CD8-positive, alpha-beta T cell (primary cell): ENCODE measurements at regions of chr2 and their contacts with region 1.

Region 1: DNA sequence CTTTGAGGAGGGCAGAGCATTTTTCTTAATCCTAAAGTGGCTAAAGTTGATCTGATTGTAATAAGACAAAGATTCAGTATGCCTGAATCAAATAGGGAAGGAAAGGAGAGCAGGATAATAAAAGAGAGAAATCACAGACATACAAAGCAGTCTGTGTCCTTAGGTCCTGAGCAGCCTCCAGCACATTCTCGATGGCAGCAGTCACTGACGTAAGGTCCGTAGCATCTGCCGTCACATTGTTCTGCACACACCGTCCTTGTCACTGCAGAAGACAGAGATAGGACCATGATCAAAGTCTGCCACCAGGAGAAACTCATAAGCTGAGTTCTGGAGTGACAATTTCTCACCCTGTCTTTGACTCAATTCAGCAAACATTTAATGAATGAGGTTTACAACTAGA is 813.7 kb downstream of the ERBB4 start:
- DNase-seq: no peak
- ATAC-seq: no peak
- H3K4me3 ChIP-seq: no peak overlapping the region
- H3K4me3 Mint-ChIP-seq: no peak overlapping the region
- H3K27ac ChIP-seq: no peak overlapping the region
- H3K27ac Mint-ChIP-seq: no peak overlapping the region
- H3K4me1 ChIP-seq: no peaks in the 10 kb centered on the region
- H3K4me1 Mint-ChIP-seq: no peaks in the 10 kb centered on the region
- H3K27me3 ChIP-seq: no peaks in the 10 kb centered on the region
- H3K27me3 Mint-ChIP-seq: no peaks in the 10 kb centered on the region
- CTCF ChIP-seq: no peak

Region 2: DNA sequence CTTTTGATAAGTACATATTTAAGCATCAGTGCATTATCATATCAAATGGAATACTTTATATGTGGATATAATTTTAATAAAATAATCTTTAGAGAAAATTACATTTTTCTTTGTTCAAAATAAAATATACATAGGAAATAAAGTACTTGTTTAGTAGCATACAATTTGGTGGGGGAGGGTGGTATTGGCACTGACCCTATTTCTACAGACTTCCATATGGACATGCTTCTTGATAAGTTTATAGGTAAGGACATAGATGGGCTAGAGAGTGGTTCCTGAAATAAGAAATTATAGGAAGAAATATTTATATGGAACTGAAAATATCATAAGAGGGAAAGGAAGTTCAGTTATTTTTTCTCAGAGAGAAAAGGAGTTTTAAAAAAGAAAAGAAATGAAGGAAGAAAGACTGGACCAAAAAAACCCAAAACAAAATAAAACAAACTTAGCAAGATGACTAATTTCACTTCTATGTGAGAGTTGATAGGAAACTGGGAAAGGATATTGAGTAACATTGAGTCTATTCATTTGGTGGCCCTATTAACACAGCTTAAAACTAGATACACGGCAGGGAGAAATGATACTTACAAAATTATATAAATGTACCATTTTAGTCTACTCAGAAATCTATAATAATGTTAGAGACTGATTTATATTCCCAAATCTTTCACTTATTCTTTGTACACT is 307.7 kb after region 1 on chr2:
- CTCF ChIA-PET with region 1: no interaction called
- POLR2A ChIA-PET with region 1: no interaction called
- intact Hi-C with region 1: no loop called
- DNase-seq: no peak
- ATAC-seq: no peak
- H3K4me3 ChIP-seq: no peak overlapping the region
- H3K4me3 Mint-ChIP-seq: no peak overlapping the region
- H3K27ac ChIP-seq: no peak overlapping the region
- H3K27ac Mint-ChIP-seq: no peak overlapping the region
- H3K4me1 ChIP-seq: no peaks in the 10 kb centered on the region
- H3K4me1 Mint-ChIP-seq: no peaks in the 10 kb centered on the region
- H3K27me3 ChIP-seq: no peaks in the 10 kb centered on the region
- H3K27me3 Mint-ChIP-seq: no peaks in the 10 kb centered on the region
- CTCF ChIP-seq: no peak

Region 3: GRCh38 chr2:212990697-212991096 is 1265.8 kb after region 1 on chr2:
- CTCF ChIA-PET with region 1: no interaction called
- POLR2A ChIA-PET with region 1: no interaction called
- intact Hi-C with region 1: loop called in 1 of 2 experiments (anchors 5 kb)
- DNase-seq: no peak
- ATAC-seq: no peak
- H3K4me3 ChIP-seq: no peak overlapping the region
- H3K4me3 Mint-ChIP-seq: no peak overlapping the region
- H3K27ac ChIP-seq: no peak overlapping the region
- H3K27ac Mint-ChIP-seq: no peak overlapping the region
- H3K4me1 ChIP-seq: no peaks in the 10 kb centered on the region
- H3K4me1 Mint-ChIP-seq: no peaks in the 10 kb centered on the region
- H3K27me3 ChIP-seq: no peaks in the 10 kb centered on the region
- H3K27me3 Mint-ChIP-seq: no peaks in the 10 kb centered on the region
- CTCF ChIP-seq: no peak